ENCODE measurements at regions of chr19 and their contacts with region 1.

Region 1: DNA sequence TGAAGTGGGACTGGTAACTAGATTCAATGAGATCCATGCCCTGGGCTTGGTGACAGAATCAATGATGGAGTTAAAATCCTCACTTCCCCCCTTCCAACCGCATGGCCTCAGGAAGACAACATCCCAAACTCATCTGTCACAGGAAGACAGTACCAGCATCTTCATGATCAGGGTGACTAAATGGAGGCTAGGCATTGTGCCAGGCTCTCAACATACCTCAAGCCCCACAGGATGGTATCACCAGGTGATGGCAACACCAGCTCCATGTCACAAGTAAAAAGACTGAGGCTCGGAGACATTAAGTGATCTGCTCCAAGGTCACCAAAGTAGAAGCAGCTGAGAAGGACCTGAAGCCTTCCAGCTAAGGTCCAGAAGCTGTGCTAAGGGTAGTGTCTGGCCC is 14.2 kb downstream of the MED26 start:
- DNase-seq: no peak
- ATAC-seq: no peak
- H3K4me3 ChIP-seq: no peak overlapping the region
- H3K4me3 Mint-ChIP-seq: no peak overlapping the region
- H3K27ac ChIP-seq: no peak overlapping the region
- H3K27ac Mint-ChIP-seq: peak overlapping the region; percentile 26
- H3K4me1 ChIP-seq: peaks cover 59 to 60% of the 10 kb centered on the region in 2 donors
- H3K4me1 Mint-ChIP-seq: peaks cover 85% of the 10 kb centered on the region
- H3K27me3 ChIP-seq: no peaks in the 10 kb centered on the region
- H3K27me3 Mint-ChIP-seq: no peaks in the 10 kb centered on the region
- CTCF ChIP-seq: no peak

Region 2: DNA sequence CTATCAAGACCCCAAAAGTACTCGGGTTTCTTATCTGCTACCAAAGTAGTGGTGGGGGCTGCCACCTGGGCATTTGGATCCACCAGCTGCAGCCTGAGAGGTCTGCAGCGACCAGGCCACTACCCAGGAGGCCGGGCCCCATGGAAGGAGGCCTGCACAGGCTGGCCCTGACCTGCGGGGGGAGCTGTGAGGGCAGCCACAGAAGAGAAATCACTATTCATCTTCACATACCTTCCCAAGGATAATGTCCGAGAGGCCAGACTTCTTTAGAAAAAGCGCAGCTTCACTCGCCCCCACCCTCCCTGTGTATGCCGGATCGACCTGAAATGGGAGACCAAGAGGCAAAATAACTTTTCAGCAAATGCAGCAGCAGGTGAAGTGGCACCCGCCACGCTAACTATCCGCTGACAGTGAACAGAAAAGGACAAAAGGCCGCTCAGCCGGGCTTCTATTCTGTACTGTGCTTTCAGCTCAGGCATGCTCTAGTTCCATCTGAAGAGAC is 172.1 kb before region 1 on chr19:
- CTCF ChIA-PET with region 1: no interaction called
- POLR2A ChIA-PET with region 1: no interaction called
- intact Hi-C with region 1: no loop called
- DNase-seq: no peak
- ATAC-seq: no peak
- H3K4me3 ChIP-seq: no peak overlapping the region
- H3K4me3 Mint-ChIP-seq: peak overlapping the region; percentile 16
- H3K27ac ChIP-seq: no peak overlapping the region
- H3K27ac Mint-ChIP-seq: peak overlapping the region; percentile 97
- H3K4me1 ChIP-seq: peaks cover 57 to 80% of the 10 kb centered on the region in 2 donors
- H3K4me1 Mint-ChIP-seq: peaks cover 77% of the 10 kb centered on the region
- H3K27me3 ChIP-seq: no peaks in the 10 kb centered on the region
- H3K27me3 Mint-ChIP-seq: no peaks in the 10 kb centered on the region
- CTCF ChIP-seq: peak; percentile 42

Region 3: DNA sequence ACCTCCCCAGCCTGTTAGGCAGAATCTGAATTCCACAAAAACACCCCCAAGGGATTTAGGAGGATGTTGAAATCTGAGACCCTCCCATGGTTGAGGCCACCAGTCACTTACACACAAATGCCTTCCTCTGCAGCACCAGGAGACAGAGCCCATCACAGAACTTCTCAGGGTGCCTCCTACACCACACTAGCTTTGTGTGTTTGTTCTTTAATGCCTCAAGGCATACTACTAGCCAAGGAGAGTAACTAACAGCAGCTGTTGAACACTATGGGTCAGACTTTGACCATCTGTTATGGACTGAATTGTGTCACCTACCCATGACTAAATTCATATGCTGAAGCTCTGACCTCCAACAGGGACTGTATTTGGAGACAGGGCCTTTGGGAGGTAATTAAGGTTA is 23.7 kb after region 1 on chr19:
- CTCF ChIA-PET with region 1: no interaction called
- POLR2A ChIA-PET with region 1: no interaction called
- intact Hi-C with region 1: no loop called
- DNase-seq: no peak
- ATAC-seq: no peak
- H3K4me3 ChIP-seq: no peak overlapping the region
- H3K4me3 Mint-ChIP-seq: no peak overlapping the region
- H3K27ac ChIP-seq: no peak overlapping the region
- H3K27ac Mint-ChIP-seq: peak overlapping the region; percentile 46
- H3K4me1 ChIP-seq: peaks cover 4 to 5% of the 10 kb centered on the region in 2 donors
- H3K4me1 Mint-ChIP-seq: peaks cover 12% of the 10 kb centered on the region
- H3K27me3 ChIP-seq: no peaks in the 10 kb centered on the region
- H3K27me3 Mint-ChIP-seq: no peaks in the 10 kb centered on the region
- CTCF ChIP-seq: no peak

Region 4: GRCh38 chr19:16751733-16752132 is 137.9 kb after region 1 on chr19:
- CTCF ChIA-PET with region 1: no interaction called
- POLR2A ChIA-PET with region 1: no interaction called
- intact Hi-C with region 1: no loop called
- DNase-seq: no peak
- ATAC-seq: no peak
- H3K4me3 ChIP-seq: no peak overlapping the region
- H3K4me3 Mint-ChIP-seq: no peak overlapping the region
- H3K27ac ChIP-seq: no peak overlapping the region
- H3K27ac Mint-ChIP-seq: no peak overlapping the region
- H3K4me1 ChIP-seq: no peaks in the 10 kb centered on the region
- H3K4me1 Mint-ChIP-seq: no peaks in the 10 kb centered on the region
- H3K27me3 ChIP-seq: peaks cover 0 to 3% (median 1%) of the 10 kb centered on the region in 4 experiments
- H3K27me3 Mint-ChIP-seq: peaks cover 7% of the 10 kb centered on the region
- CTCF ChIP-seq: peak; percentile 28

Region 5: DNA sequence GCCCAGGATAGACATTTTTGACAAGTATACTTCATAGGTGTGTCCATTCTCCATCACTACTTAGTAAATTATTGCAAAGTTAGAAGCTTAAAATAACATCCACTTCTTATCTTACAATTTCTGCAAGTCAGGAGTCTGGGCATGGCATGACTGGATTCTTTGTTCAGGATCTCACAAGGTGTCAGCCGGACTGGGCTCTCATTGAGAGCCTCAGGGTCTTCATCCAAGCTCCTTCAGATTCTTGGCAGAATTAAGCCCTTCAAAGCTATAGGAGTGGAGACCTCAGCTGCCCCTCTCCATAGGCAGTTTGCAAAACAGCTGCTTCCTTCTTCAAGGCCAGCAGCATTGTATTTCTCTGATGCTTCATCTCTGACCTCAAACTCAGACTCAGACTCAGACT is 206.2 kb after region 1 on chr19:
- CTCF ChIA-PET with region 1: no interaction called
- POLR2A ChIA-PET with region 1: interaction called, 11 read pairs
- intact Hi-C with region 1: no loop called
- DNase-seq: no peak
- ATAC-seq: no peak
- H3K4me3 ChIP-seq: no peak overlapping the region
- H3K4me3 Mint-ChIP-seq: no peak overlapping the region
- H3K27ac ChIP-seq: no peak overlapping the region
- H3K27ac Mint-ChIP-seq: no peak overlapping the region
- H3K4me1 ChIP-seq: no peaks in the 10 kb centered on the region
- H3K4me1 Mint-ChIP-seq: peaks cover 3% of the 10 kb centered on the region
- H3K27me3 ChIP-seq: peaks cover 0 to 4% (median 1%) of the 10 kb centered on the region in 4 experiments
- H3K27me3 Mint-ChIP-seq: peaks cover 25% of the 10 kb centered on the region
- CTCF ChIP-seq: no peak

Measured in B cell (primary cell).